Dendritic cell treated with granulocyte-macrophage colony-stimulating factor and Interleukin-4, amounts not matched to agents 40 ng/mL and 50 ng/mL, for 4 days (primary cell): ENCODE measurements at regions of chr22 and their contacts with region 1.

Region 1: DNA sequence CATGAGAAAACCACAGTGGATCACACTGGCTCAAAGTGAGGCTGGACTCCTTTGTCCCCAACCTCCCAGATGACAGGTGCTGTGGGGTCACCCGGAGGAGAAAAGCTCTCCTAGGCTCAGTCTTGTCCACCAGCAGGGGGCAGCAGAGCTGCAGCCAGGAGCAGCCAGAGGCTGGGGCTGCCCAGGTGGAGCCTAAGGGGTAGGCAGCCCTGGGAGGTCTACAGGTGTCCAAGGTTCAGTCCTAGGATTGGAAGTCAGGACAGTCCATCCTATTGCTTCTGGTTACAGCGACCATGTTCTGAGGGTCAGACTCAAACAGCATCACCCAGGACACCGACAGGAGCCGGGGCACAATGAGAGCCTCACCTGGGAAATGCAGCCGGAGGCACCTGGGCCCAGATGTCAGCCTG is 77.6 kb upstream of the IGLL5 start:
- H3K4me3 Mint-ChIP-seq: no peak overlapping the region
- H3K27ac Mint-ChIP-seq: no peak overlapping the region
- H3K4me1 Mint-ChIP-seq: peaks cover 24% of the 10 kb centered on the region
- H3K27me3 Mint-ChIP-seq: no peaks in the 10 kb centered on the region

Region 2: DNA sequence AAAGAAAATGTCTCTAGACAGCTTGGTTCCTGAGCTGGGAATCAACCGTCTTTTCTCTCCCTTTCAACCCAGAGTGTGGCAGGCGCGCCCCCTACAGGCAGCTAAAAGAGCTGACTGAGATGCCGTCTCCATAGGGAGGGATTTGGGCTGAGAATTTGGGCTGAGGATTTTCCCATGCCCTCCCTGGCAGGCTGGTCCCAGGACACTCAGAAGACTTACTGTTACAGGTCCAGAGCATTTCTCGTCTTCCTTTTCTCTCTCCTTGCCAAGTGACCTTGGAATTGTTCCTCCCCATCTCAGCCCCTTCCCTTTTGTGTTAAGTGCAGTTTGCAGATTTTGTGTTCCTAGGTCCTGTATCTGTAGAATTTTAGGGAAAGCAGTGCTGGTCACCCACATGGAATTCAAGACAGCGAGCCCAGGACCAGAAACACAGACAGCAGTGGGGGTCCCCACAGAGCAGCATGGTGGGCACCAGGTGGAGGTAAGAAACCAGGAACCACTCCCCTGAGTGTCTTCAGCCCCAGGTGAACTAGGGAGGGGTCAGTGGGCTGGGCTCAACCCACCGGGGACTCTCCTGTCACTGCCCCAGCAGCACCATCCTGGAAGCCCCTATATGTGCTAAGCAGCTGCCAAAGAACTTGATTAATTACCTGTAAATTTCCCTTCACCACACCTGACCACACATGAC is 67.6 kb after region 1 on chr22:
- intact Hi-C with region 1: loop called (anchors 2 kb)
- H3K4me3 Mint-ChIP-seq: no peak overlapping the region
- H3K27ac Mint-ChIP-seq: no peak overlapping the region
- H3K4me1 Mint-ChIP-seq: peaks cover 18% of the 10 kb centered on the region
- H3K27me3 Mint-ChIP-seq: peaks cover 1% of the 10 kb centered on the region